ENCODE measurements at regions of chrX and their contacts with region 1.

Region 1: DNA sequence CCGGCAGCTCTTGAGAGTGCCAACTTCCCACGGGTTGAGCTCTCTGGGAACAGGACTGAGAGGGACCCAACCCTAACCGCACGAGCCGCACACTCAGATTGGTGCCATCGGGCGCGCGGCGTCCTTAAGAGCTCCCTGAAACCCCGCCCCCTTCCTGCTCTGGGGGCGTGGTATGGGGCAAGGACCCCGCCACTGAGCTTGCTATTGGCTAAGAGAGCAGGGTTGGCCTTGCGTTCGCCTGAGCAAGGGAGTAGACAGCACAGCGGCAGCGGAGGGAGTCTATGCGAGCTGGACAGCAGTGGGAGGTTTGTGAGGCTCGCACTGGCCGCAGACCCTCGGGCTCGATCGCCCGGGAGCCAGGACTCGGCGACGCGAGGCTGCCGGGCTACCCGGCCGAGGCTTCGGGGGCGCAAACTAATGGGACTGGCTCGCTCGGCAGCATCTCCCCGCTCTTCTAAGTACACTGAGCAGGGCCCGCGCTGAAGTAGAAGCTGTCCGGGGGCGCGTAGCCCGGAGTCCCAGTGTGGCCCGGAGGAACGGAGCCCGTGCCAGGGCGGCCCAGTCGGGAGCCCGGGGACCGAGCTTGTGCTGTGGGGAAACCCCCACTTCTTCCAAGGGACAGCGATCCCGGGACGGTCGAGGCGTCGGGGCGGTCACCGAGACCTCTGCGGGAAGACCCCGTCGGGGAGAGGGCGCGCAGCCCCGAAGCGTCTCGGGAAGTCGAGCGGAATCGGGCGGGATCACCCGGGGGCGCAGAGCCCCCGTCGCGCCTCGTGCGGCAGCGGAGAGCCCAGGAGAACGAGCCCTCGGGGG is at the start of gene EFNB1:
- DNase-seq: peak; percentile 92 to 97
- H3K4me3 ChIP-seq: peak within 1 kb of the TSS; percentile 64 to 79 (median 70)
- H3K27ac ChIP-seq: peak within 1 kb of the TSS; percentile 54 to 87 (median 83)
- H3K4me1 ChIP-seq: peaks cover 0 to 47% (median 26%) of the 10 kb centered on the region in 4 donors
- H3K27me3 ChIP-seq: peaks cover 0 to 6% (median 0%) of the 10 kb centered on the region in 3 donors
- CTCF ChIP-seq: no peak
- EP300 ChIP-seq: no peak
- POLR2A ChIP-seq: peak in 2 of 4 donors; percentile 84 to 89
- total RNA-seq, gene EFNB1: 5.8 to 160 (median 26.1) TPM

Region 2: GRCh38 chrX:68332201-68332731 is 496.7 kb before region 1 on chrX:
- intact Hi-C with region 1: no loop called
- DNase-seq: peak in 1 of 2 donors; percentile 9
- H3K4me3 ChIP-seq: no peak overlapping the region
- H3K27ac ChIP-seq: no peak overlapping the region
- H3K4me1 ChIP-seq: no peaks in the 10 kb centered on the region
- H3K27me3 ChIP-seq: no peaks in the 10 kb centered on the region
- CTCF ChIP-seq: no peak
- EP300 ChIP-seq: no peak
- POLR2A ChIP-seq: no peak

Region 3: DNA sequence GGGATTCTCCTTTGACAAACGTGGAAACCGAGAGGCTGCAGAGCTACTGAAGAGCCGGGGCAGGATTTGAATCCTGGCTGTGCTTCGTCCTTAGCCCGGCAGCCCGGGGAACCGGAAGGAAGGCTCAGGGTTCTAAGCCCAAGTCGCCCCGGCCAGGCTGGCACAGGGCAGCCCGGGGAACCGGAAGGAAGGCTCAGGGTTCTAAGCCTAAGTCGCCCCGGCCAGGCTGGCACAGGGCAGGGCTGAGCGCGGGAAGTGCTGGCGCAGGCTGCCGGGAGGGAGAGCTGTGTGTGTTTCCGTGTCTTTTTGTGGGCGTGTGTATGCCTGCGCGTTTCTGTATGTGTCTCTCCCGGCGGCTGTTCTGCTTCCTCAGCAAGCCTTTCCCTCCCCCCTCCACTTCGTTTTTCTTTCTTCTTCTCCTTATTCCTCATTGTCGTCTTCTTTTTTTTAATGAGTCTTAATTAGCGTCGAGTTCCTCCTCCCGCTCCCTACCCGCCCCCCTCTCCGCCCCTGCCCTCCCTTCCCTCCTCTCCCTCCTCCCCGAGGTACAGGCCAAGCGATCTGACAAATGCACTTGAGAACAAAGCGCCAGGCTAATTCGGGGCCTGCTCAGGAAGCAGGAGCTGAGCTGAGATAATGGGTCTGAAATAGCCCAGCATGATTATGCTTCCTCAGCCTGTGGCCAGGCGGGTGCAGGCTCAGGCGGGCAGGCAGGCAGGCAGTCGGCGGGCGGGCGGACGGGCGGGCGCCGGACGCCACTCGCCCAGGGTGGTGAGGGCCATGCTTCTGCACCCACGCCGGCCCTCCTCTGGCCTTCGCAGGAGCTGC is 65.8 kb after region 1 on chrX:
- intact Hi-C with region 1: loop called (anchors 5 kb)
- DNase-seq: peak; percentile 64 to 84
- H3K4me3 ChIP-seq: peak overlapping the region; percentile 11 to 33 (median 18)
- H3K27ac ChIP-seq: peak overlapping the region; percentile 78 to 87 (median 85)
- H3K4me1 ChIP-seq: peaks cover 12 to 32% (median 20%) of the 10 kb centered on the region in 4 donors
- H3K27me3 ChIP-seq: peaks cover 0 to 19% (median 0%) of the 10 kb centered on the region in 3 donors
- CTCF ChIP-seq: no peak
- EP300 ChIP-seq: no peak
- POLR2A ChIP-seq: no peak

Region 4: DNA sequence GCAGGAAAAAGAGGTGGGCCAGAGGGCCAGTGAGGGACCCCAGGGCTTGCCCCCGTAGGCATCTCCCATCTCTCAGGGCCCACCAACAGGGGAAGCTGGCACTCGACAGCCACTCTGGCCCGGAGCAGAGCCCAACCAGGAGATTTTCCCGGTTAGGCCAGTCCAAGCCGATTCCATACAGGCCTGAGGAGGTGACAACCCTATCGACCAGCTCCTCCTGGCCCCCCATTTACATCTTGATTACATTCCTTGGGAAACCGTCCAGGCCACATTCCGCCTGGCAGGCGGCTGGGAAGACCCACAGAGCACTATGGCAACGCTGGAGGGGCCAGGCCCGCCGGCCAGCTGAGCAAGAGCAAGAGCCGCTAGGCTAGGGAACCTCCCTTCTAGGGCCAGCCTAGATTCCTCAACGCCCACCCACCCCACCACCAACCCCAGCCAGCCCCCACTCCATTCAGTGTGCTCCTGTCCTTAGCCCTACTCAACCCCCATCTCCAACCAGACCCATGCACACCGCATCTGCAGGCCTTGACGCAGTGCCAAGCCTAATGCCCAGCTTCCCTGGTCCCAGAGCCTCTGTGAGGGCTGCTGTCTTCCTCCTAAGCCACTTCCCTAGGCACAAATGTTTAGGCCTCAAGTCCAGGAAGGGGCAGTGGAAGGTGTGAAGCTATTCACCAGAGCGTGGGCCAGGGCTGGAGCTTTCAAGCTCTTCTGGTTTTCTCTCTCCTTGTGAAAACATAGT is 161.1 kb after region 1 on chrX:
- intact Hi-C with region 1: no loop called
- DNase-seq: peak; percentile 59 to 83
- H3K4me3 ChIP-seq: no peak overlapping the region
- H3K27ac ChIP-seq: peak overlapping the region in 3 of 5 donors; percentile 7 to 34 (median 23)
- H3K4me1 ChIP-seq: peaks cover 5 to 12% (median 8%) of the 10 kb centered on the region in 4 donors
- H3K27me3 ChIP-seq: peaks cover 0 to 4% (median 0%) of the 10 kb centered on the region in 3 donors
- CTCF ChIP-seq: no peak
- EP300 ChIP-seq: no peak
- POLR2A ChIP-seq: no peak

Region 5: GRCh38 chrX:69000877-69001276 is 171.9 kb after region 1 on chrX:
- intact Hi-C with region 1: no loop called
- DNase-seq: peak in 1 of 2 donors; percentile 0
- H3K4me3 ChIP-seq: no peak overlapping the region
- H3K27ac ChIP-seq: no peak overlapping the region
- H3K4me1 ChIP-seq: peaks cover 0 to 25% (median 14%) of the 10 kb centered on the region in 4 donors
- H3K27me3 ChIP-seq: no peaks in the 10 kb centered on the region
- CTCF ChIP-seq: no peak
- EP300 ChIP-seq: no peak
- POLR2A ChIP-seq: no peak

Region 6: DNA sequence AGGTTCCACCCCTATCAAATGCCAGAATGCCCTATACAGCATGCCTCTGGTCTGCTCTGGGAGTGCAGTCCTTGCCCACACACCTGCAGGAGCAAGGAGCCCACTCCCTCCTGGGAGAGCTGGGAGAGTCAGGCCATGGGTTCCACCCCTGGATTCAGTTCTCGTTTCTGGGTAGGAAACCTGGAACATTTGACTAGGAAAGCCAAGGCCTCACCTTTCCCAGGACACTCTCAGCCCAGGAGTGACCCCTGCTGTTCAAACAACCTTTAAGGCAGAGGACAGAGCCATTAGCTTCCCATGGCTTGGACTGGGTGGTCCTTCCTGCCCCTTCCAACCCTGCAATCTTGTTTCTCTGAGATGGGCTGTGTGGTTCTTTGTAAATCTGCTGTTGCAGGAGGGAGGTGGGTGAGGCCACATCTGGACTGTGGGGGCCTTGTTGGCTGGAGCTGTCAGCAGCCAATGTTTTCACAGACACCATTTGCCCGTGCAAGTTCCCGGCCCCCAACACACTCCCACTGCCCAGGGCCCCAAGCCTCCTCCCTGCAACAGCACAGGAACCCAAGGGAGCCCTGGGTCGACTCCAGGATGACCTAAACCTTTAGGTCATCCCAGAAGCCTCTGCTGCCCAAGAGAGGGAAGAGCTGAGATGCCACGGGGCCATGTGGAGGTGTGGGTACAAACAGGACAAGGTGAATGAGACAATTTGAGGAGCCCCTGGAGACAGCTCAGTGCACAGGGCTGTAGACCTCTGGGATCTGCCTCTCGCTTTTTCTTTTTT is 231.9 kb after region 1 on chrX:
- intact Hi-C with region 1: loop called (anchors 5 kb)
- DNase-seq: peak; percentile 54 to 63
- H3K4me3 ChIP-seq: no peak overlapping the region
- H3K27ac ChIP-seq: no peak overlapping the region
- H3K4me1 ChIP-seq: no peaks in the 10 kb centered on the region
- H3K27me3 ChIP-seq: peaks cover 0 to 6% (median 0%) of the 10 kb centered on the region in 3 donors
- CTCF ChIP-seq: peak in 4 of 7 experiments; percentile 12 to 50 (median 23)
- EP300 ChIP-seq: no peak
- POLR2A ChIP-seq: no peak

Region 7: DNA sequence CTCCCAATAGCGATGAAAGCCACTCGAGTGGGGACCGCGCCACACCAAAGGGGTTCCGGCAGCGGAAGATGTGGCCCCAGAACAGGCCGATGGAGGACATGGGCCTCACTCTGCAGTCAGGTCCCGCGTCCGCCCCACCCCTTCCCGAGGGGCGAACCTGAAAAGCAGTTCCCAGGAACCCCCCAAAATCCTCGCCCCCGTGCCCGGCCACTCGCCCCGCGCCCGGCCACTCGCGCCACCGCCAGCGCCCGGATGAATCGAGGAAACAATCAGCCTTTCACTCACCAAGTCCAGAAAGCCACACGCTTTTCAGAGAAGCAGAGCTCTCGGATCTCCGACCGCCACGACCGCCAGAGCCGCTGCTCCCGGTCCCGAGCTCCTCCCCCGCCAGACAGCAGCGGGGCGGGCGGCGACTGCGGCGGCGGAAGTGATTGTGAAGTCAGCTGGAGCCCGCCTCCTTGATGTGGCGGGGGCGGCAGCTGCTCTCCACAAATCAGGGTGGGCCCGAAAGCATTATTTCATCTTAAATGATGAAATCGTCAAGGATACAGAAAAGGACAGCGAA is 336.2 kb after region 1 on chrX and contains the start of gene PJA1:
- intact Hi-C with region 1: loop called (anchors 10 kb)
- DNase-seq: peak; percentile 69 to 92
- H3K4me3 ChIP-seq: peak within 1 kb of the TSS; percentile 56 to 75 (median 70)
- H3K27ac ChIP-seq: peak within 1 kb of the TSS; percentile 74 to 87 (median 80)
- H3K4me1 ChIP-seq: peaks cover 0 to 17% (median 2%) of the 10 kb centered on the region in 4 donors
- H3K27me3 ChIP-seq: peaks cover 0 to 13% (median 0%) of the 10 kb centered on the region in 3 donors
- CTCF ChIP-seq: no peak
- EP300 ChIP-seq: no peak
- POLR2A ChIP-seq: no peak
- total RNA-seq, gene PJA1: 1.7 to 41.4 (median 24.1) TPM

Region 8: DNA sequence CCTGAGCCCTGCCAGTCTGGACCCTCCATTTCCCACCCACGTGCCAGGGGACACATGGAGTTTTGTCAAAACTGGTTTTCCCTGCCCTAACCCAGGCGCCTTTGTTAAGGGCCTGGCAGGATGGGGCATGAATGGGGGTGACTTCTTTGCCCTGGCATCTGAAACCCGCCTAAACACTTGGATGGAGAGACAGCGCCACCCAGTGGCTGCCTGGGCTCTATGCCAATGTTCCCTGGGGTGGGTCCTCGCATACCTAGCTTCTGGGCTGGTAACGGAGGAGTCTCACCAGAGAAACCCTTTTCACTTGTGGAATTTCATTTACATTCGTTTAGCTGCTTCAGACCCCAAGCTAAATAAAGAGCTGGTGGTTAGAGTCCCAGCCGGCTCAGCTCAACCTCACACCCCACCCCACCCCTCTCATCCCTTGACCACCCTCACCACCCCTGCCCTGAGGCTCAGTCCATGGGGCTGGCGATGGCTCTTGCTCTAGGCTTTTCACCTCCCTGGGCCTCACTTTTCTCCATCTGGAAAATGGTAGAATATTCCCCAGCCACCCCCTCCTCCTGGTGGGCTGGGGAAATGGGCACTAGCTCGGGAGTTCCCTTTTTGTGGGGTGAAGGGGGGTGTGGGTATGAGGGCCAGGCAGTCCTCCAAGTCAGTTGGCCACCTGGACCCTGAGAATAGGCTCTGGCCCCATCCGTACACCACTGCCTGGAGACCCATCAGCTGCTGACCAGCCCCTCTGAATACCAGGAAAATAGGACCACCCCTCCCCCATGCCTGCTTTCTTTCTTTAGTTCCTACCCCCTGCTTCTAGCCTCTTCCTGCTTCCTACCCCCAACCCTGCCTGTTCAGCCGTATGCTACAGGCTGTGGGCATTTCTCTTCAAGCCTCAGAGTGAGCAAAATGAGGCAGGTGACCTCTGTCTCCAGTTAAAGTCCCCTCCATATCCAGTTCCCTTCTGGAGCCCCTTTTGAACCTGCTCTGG is 393.5 kb after region 1 on chrX:
- intact Hi-C with region 1: loop called (anchors 10 kb)
- DNase-seq: peak; percentile 68 to 88
- H3K4me3 ChIP-seq: no peak overlapping the region
- H3K27ac ChIP-seq: no peak overlapping the region
- H3K4me1 ChIP-seq: peaks cover 0 to 12% (median 0%) of the 10 kb centered on the region in 4 donors
- H3K27me3 ChIP-seq: peaks cover 0 to 22% (median 0%) of the 10 kb centered on the region in 3 donors
- CTCF ChIP-seq: peak in 5 of 7 experiments; percentile 42 to 75 (median 54)
- EP300 ChIP-seq: no peak
- POLR2A ChIP-seq: no peak

Region 9: GRCh38 chrX:69387567-69388487 is 558.9 kb after region 1 on chrX:
- intact Hi-C with region 1: loop called (anchors 10 kb)
- DNase-seq: peak; percentile 46 to 81
- H3K4me3 ChIP-seq: no peak overlapping the region
- H3K27ac ChIP-seq: no peak overlapping the region
- H3K4me1 ChIP-seq: peaks cover 0 to 4% (median 0%) of the 10 kb centered on the region in 4 donors
- H3K27me3 ChIP-seq: peaks cover 0 to 22% (median 0%) of the 10 kb centered on the region in 3 donors
- CTCF ChIP-seq: peak in 5 of 7 experiments; percentile 12 to 67 (median 54)
- EP300 ChIP-seq: no peak
- POLR2A ChIP-seq: no peak